Activated T-helper 1 cell treated with anti-CD3 and anti-CD28 coated beads, Interleukin-12 subunit alpha, Interleukin-12 subunit beta, Interleukin-2, Interleukin-4 antibody, amounts not matched to agents 30 ng/mL and 10 ng/mL and 1 ng/mL, durations not matched to agents 14 hours and 24 hours and 36 hours (primary cell): ENCODE measurements at regions of chr3 and their contacts with region 1.

Region 1: DNA sequence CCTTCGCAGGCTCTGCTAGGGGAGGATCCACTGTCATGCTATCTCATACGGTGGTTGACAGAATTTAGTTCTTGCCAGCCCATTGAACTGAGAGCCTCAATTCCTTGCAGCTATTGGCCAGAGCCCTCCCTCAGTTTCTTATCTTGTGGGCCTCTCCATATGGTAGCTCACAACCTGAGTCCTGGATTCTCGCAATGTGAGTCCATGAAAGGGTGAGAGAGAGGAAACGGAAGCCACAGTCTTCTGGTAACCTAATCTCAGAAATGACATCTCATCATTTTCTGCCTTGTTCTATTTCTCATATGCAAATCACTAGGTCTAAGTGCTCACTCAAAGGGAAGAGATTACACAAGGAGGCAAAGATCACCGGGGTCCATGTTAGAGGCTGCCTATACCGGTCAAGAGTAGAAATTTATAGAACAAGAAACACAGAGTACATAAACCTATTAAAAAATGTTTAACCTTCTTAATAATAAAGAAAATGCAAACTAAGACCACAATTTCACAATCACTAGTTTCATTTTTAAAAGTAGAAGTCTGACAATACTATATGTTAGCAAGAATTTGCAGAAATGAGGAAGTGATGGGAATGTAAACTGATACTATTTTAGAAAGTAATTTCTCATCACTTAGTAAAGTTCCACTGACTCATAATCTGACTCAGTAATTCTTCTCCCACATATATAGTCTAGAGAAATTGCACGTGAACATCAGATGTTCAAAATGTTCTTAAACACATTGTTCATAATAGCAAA is 378.4 kb upstream of the AGTR1 start:
- DNase-seq: no peak
- H3K4me3 Mint-ChIP-seq: no peak overlapping the region
- H3K27ac Mint-ChIP-seq: peak overlapping the region; percentile 9
- H3K4me1 Mint-ChIP-seq: peaks cover 12% of the 10 kb centered on the region
- H3K27me3 Mint-ChIP-seq: no peaks in the 10 kb centered on the region

Region 2: DNA sequence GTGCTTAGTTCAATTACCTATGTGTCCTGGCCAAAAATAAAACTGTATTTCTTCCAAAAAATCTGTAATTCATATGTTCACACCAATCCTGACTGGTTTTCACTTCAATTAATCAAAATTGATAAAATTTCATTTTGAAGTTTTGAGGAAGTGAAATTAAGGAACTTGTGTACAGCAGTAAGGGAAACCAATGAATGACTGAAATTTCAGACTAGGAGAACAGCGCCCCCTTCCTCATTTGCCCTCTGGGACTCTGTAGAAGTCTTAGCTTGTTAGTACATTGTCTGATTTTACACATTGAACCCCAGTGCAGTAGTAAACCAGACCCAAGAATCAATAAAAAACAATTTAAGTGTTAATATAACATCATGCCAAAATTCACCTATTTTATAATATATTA is 117.0 kb before region 1 on chr3:
- intact Hi-C with region 1: no loop called
- DNase-seq: no peak
- H3K4me3 Mint-ChIP-seq: no peak overlapping the region
- H3K27ac Mint-ChIP-seq: no peak overlapping the region
- H3K4me1 Mint-ChIP-seq: no peaks in the 10 kb centered on the region
- H3K27me3 Mint-ChIP-seq: no peaks in the 10 kb centered on the region

Region 3: DNA sequence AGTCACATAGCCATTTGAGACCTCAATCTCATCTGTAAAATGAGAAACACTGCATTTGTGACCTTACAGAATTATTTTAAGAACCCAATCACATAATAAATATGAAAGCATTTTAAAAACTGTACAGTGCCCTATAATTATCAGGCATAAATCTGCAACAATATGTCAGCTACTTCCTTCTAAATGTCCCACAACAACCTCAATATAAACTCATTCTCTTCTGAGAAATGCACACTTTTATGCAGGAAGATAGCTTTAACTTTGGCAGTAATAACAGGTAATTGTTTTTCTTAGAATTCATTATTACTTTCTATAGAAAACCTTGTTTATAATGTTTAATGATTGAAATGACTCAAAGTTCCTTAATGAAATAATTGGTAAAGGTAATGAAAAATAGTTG is 22.3 kb before region 1 on chr3:
- intact Hi-C with region 1: loop called (anchors 1 kb)
- DNase-seq: no peak
- H3K4me3 Mint-ChIP-seq: no peak overlapping the region
- H3K27ac Mint-ChIP-seq: no peak overlapping the region
- H3K4me1 Mint-ChIP-seq: peaks cover 20% of the 10 kb centered on the region
- H3K27me3 Mint-ChIP-seq: no peaks in the 10 kb centered on the region